Ascending aorta (tissue), 2 donors: ENCODE measurements at regions of chr10 and their contacts with region 1.

Region 1: DNA sequence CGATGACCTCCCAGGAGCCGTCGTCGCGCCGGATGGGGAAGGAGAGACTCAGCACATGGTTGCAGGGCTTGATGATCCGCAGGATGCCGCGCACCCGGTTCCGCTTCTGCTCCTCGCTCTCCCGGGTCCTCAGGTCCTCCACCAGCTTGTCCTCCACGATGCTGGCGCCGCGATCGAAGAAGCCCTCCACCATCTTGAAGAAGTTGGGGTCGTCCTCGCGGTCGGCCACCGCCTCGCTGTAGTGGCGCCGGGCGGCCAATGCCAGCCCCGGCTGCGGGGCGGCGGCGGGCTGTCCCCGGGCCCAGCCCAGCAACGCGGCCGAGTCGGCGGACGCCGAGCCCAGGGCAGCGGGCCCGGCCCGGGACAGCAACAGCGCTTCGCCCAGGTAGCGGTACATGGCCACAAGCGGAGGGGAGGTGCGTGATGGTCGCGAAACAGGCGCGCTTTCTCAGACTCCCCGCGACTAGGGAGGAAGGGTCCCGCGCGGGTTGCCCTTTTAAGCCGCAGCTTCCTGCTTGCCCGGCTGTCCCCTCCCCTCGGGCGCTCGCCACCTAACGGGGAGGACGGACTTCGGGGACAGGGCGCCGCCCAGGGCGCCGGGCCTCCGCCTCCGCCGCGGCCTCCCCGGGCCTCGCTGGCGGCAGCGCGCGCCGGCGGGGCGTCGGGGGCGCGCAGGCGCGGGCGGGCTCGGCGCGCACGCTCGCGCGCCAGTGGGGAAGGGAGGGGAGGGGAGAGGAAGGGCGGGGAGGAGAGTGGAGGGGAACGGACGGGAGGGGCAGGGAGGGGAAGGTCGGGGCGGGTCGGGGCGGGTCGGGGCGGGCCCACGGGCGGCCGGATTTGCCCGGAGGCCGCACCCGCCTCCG is at the starts of genes GLUD1 and SHLD2:
- DNase-seq: peak; percentile 69 to 97
- H3K4me3 ChIP-seq: peak within 1 kb of the TSS; percentile 81 to 84
- H3K27ac ChIP-seq: peak within 1 kb of the TSS; percentile 96 to 99
- H3K4me1 ChIP-seq: peaks cover 6 to 25% of the 10 kb centered on the region in 2 donors
- H3K27me3 ChIP-seq: no peaks in the 10 kb centered on the region
- CTCF ChIP-seq: no peak
- total RNA-seq, gene GLUD1: 134 TPM
- total RNA-seq, gene SHLD2: 19.7 TPM

Region 2: GRCh38 chr10:86668297-86669165 is 426.1 kb before region 1 on chr10 and contains the start of gene LDB3:
- intact Hi-C with region 1: loop called (anchors 10 kb)
- DNase-seq: peak; percentile 65 to 93
- H3K4me3 ChIP-seq: peak within 1 kb of the TSS; percentile 46 to 74
- H3K27ac ChIP-seq: peak within 1 kb of the TSS; percentile 92
- H3K4me1 ChIP-seq: peaks cover 14 to 48% of the 10 kb centered on the region in 2 donors
- H3K27me3 ChIP-seq: no peaks in the 10 kb centered on the region
- CTCF ChIP-seq: no peak
- total RNA-seq, gene LDB3: 27.4 TPM

Region 3: DNA sequence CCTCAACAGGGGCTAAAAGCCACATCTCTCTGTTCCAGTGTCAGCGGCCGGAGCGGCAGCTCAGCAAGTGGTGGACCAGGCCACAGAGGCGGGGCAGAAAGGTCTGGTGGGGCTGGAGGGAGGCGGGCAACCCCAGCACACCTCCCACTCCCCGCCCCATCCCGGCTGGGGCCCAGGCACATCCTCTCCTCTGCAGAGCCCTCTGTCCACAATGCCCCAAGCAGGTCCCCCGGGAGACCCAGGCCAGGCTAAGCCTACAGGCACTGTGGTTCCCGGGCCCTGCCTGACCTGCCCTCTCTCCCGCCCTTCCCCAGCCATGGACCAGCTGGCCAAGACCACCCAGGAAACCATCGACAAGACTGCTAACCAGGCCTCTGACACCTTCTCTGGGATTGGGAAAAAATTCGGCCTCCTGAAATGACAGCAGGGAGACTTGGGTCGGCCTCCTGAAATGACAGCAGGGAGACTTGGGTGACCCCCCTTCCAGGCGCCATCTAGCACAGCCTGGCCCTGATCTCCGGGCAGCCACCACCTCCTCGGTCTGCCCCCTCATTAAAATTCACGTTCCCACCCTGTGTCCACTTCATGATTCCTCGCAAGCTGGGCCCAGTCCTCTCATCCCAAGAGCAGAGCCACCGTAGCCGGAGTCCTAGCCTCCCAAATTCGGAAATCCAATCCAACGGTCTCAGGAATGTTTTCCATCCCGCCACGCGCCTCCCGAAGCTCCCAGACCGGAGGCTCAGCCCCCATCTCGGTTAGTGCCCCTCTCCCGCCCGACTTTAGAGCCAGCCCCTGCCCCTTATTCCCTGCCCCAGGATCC is 124.2 kb before region 1 on chr10:
- intact Hi-C with region 1: loop called (anchors 1 kb)
- DNase-seq: peak in 1 of 2 donors; percentile 93
- H3K4me3 ChIP-seq: peak overlapping the region; percentile 68 to 79
- H3K27ac ChIP-seq: peak overlapping the region; percentile 99 to 100
- H3K4me1 ChIP-seq: peaks cover 16 to 39% of the 10 kb centered on the region in 2 donors
- H3K27me3 ChIP-seq: no peaks in the 10 kb centered on the region
- CTCF ChIP-seq: no peak